OCI-LY7 (cell line): ENCODE measurements at regions of chr17 and their contacts with region 1.

Region 1: DNA sequence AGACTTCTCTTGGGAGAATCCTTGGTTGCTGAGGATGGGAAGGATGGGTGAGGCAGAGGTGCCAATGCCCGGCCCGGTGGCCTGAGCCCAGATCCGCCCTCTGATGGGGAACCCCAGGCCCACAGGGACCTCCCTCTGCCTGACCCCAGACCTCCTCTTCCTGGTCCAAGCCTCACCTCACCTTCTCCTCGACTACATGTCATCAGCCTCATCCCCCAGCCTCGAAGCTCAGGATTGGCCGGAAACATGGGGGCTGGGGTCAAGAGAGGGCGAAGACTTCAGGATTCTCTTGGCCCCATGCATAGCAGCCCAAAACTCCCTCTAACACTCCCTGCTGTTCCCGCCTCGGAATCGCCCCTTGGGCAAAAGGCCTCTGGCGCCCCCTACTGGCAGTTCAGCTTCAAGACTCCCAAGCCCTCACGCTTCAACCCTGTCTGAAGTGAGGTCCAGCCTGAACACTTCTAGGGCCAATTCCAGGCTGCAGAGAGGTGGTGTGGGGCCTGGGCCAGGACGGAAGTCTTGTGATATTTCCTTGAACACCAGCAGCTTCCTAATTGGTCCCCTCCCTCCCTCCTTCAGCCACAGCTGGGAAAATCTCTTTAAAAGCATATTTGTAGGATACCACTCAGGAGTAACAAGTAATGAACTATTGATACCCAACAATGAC is 47.2 kb downstream of the ARHGAP27 start:
- DNase-seq: peak; percentile 90
- H3K4me3 ChIP-seq: no peak overlapping the region
- H3K27ac ChIP-seq: no peak overlapping the region
- H3K4me1 ChIP-seq: peaks cover 8% of the 10 kb centered on the region
- CTCF ChIP-seq: peak; percentile 99

Region 2: DNA sequence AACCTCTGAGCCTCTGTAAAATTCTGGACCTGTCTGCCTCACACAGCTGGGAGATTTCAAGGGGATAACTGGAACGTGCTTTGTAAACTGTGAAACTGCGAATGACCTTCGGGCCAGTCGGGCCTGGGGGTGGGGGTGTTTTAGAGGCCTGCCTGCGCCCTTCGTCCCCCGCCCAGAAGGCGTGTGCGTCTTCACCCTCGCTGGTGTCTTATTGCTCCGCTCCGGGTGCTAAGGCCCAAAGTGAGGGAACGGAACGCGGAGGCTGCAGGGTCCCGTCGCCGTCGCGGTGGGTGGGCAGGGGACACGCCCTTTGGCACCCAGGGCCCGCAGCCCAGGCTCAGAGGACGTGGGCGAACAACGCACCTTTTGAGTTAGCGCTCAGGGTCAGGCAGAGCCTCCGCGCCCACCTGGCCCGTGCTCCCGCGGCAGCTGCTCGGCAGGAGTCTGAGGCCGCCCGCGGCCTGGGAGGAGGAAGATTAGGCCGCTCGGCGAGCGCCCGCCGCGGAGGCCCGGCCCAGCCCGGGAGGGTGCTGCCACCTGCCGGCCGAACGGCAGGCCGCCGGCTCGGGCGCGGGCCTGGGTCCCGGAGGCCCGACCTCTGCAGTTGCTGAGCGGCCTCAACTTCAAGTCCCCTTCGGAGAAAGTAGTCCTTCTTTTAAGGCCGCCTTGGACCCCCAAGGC is 363.7 kb before region 1 on chr17:
- CTCF ChIA-PET with region 1: no interaction called
- POLR2A ChIA-PET with region 1: no interaction called
- intact Hi-C with region 1: no loop called
- DNase-seq: peak; percentile 76
- H3K4me3 ChIP-seq: no peak overlapping the region
- H3K27ac ChIP-seq: no peak overlapping the region
- H3K4me1 ChIP-seq: peaks cover 14% of the 10 kb centered on the region
- CTCF ChIP-seq: peak; percentile 87

Region 3: GRCh38 chr17:45218895-45219661 is 166.4 kb before region 1 on chr17:
- CTCF ChIA-PET with region 1: no interaction called
- POLR2A ChIA-PET with region 1: no interaction called
- intact Hi-C with region 1: loop called (anchors 2 kb)
- DNase-seq: peak; percentile 80
- H3K4me3 ChIP-seq: no peak overlapping the region
- H3K27ac ChIP-seq: no peak overlapping the region
- H3K4me1 ChIP-seq: peaks cover 24% of the 10 kb centered on the region
- CTCF ChIP-seq: peak; percentile 97

Region 4: DNA sequence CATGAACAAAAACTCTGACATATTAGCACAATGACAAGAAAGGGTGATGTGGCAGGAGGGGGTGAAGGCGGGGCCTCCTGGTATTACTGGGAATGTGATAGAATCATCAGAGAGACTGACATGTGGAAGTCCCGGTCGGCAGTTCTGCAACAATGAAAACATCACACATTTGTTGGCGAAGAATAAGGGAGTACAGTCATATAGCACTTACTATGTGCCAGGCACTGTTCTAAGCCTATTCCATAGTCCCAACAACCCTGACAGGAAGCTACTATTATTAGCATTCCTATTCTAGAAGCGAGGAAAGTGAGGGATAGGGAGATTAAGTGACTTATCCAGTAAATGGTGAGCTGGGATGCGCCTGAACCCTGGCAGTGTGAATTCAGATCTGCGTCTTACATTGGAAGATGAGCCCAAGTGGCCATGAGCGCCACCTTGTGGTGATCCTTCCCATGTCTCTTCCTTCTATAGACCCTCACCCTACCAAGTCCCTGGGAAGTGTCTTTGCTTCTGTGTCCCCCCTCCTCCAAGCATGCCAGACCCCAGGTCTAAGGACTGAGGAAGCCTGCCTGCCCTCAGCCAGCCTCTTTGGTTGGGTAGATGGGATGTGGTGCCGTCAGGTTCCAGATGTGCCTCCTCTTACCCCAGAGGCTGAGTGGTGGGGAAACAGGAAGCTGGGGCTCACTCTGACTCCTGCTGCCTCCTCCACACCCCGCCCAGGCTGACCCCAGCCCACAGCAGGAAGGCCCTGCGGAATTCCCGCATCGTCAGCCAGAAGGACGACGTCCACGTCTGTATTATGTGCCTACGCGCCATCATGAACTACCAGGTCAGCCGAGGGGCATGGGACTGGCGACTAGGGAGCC is 149.8 kb before region 1 on chr17:
- CTCF ChIA-PET with region 1: no interaction called
- POLR2A ChIA-PET with region 1: no interaction called
- intact Hi-C with region 1: loop called (anchors 1 kb)
- DNase-seq: peak; percentile 79
- H3K4me3 ChIP-seq: no peak overlapping the region
- H3K27ac ChIP-seq: peak overlapping the region; percentile 3
- H3K4me1 ChIP-seq: peaks cover 19% of the 10 kb centered on the region
- CTCF ChIP-seq: peak; percentile 93

Region 5: DNA sequence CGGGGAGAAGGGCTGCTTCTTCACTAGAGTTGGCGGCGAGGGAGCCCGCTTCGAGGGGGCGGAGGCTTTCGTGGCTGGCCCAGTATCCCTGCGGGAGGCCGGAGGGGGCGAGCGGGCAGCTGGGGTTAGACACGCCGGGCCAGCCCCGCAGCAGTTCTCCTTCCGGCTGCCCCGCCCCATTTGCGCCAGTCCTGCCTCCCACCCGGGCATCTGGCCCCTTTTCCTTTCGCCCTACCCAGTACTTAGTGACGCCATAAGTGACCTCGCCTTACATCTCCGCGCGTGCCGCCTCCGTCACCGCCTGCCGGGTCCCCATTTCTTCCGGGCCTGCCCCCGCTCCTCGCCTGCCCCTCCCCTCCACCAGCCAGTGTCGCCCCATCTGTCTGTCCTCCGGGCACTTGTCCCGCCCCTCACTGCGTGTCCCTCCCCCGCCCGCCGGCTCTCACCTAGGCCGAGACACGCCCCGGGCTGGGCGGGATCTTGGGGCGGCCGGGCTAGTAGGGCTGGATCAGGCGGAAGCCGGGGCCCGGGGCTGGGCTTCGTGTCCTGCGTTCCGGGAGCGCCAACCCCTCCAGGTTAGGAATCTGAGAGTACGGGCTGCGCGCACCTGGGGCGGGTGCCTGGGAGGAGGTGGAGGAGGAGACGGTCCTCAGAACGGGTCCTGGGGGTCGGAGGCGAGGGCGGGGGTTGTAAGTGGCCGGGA is 137.9 kb before region 1 on chr17:
- CTCF ChIA-PET with region 1: no interaction called
- POLR2A ChIA-PET with region 1: no interaction called
- intact Hi-C with region 1: loop called (anchors 1 kb)
- DNase-seq: peak; percentile 94
- H3K4me3 ChIP-seq: peak overlapping the region; percentile 91
- H3K27ac ChIP-seq: peak overlapping the region; percentile 80
- H3K4me1 ChIP-seq: peaks cover 21% of the 10 kb centered on the region
- CTCF ChIP-seq: no peak

Region 6: DNA sequence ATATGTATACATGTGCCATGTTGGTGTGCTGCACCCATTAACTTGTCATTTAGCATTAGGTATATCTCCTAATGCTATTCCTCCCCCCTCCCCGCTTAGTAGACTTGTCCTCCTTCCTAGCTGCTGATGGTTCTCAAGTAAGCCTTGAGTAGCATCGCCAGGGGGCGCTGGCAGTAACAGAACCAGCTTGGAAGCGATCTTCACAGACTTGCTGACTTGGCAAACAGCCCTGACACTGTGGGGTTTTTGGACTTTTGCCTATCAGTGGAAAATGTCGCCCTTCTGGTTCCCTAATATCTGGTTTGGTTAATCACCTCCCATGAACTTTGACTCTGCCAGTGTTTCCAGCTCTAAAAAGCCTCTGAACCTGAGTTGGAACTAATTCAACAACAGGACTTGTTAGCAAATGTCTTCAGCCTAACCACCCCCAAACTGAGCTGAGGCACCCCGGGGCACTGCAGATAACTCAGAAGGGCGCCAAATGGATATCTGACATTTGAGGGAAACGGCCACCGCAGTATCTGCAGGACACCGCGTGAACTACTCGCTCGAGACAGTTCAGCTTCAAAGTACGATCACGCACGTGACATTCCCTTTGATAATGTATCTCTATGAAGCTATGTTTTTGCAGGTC is 108.1 kb before region 1 on chr17:
- CTCF ChIA-PET with region 1: interaction called, 11 read pairs
- POLR2A ChIA-PET with region 1: interaction called, 3 read pairs
- intact Hi-C with region 1: loop called (anchors 1 kb)
- DNase-seq: peak; percentile 92
- H3K4me3 ChIP-seq: no peak overlapping the region
- H3K27ac ChIP-seq: no peak overlapping the region
- H3K4me1 ChIP-seq: no peaks in the 10 kb centered on the region
- CTCF ChIP-seq: peak; percentile 88

Region 7: GRCh38 chr17:45353043-45353442 is 32.4 kb before region 1 on chr17:
- CTCF ChIA-PET with region 1: no interaction called
- POLR2A ChIA-PET with region 1: no interaction called
- intact Hi-C with region 1: no loop called
- DNase-seq: no peak
- H3K4me3 ChIP-seq: no peak overlapping the region
- H3K27ac ChIP-seq: no peak overlapping the region
- H3K4me1 ChIP-seq: no peaks in the 10 kb centered on the region
- CTCF ChIP-seq: no peak

Region 8: GRCh38 chr17:45852535-45853297 is 467.3 kb after region 1 on chr17:
- CTCF ChIA-PET with region 1: no interaction called
- POLR2A ChIA-PET with region 1: no interaction called
- intact Hi-C with region 1: no loop called
- DNase-seq: peak; percentile 63
- H3K4me3 ChIP-seq: no peak overlapping the region
- H3K27ac ChIP-seq: no peak overlapping the region
- H3K4me1 ChIP-seq: no peaks in the 10 kb centered on the region
- CTCF ChIP-seq: peak; percentile 98